Posterior vena cava (tissue), 2 donors: ENCODE measurements at regions of chr6 and their contacts with region 1.

Region 1: DNA sequence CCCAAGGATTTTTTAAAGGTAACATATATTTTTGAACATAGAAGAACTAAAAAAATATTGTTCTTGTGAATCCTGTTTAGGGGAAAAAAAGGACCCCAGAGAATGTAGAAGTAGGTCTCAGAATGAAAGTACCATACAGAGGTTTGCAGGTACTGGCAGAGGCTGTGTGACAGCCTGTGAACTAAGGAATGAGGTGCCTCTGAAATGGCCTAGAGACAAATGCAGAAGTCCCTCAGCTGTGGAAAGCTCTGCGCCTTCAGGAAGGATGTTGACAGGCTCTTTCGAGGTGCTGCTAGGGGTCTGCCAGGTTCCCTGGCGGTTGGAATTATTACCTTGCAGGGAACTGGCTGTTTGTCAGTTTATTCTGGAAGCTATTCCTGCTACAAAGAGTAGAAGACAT is 8.6 kb upstream of the TUBB2B start:
- DNase-seq: no peak

Region 2: DNA sequence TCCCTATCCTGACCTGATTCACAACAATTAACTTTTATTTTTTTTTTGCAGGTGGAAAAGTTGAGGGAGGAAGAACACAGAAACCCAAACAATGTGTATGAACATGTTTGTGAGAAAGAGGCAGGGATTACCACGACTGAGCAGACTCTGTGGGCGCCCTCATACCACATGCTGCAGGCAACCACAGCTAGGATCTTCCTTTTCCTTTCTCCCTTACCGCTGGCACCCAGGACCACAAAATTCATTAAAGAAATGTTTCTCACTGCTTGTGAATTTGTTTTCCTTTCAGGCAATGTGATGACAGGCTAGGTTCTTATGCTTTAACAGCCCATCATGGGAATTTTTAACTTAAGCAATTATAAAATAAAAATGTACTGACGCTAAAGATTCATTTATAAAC is 1277.7 kb before region 1 on chr6:
- intact Hi-C with region 1: no loop called
- DNase-seq: no peak

Region 3: GRCh38 chr6:3211681-3212080 is 24.3 kb before region 1 on chr6:
- intact Hi-C with region 1: loop called in 1 of 2 experiments (anchors 1 kb)
- DNase-seq: no peak